ENCODE measurements at regions of chr3 and their contacts with region 1.

Region 1: DNA sequence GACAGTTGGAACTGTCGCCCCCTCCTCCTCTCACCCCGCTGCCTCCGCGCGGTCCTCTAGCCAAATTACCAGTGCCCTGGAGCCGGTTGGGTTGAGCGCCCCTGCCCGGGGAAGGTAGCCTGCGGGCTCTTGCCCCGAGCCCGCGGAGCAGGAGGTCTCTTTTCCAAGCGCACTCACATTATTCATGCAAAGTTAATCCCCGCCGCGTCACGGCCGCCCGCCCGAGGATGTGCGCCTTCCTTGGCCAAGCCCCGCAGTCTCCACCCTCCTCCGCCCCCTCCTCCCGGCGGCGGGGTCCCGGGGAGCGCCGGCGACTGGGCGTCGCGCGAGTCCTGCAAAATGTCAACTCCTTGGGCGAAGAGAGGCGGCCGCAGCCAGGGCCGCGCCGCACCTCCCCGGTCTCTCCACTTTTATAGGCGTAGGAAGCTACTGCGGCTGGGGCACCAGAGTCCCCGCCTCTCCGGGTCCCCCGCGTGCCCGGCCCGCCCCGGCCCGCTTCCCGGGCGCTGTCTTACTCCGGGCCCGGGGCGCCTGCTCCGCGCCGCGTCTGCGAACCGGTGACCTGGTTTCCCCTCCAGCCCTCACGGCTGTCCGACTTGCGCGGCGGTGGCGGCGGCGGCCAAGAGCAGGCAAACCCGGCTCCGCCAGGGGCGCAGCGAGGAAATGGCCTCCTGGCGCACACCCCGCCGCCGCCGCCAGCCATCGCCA is at the start of gene THRB:
- DNase-seq: peak; percentile 84 to 91
- H3K4me3 ChIP-seq: peak within 1 kb of the TSS; percentile 65 to 88
- H3K27ac ChIP-seq: peak within 1 kb of the TSS; percentile 96 to 99
- H3K4me1 ChIP-seq: peaks cover 0 to 54% (median 29%) of the 10 kb centered on the region in 4 donors
- H3K27me3 ChIP-seq: no peaks in the 10 kb centered on the region
- CTCF ChIP-seq: peak; percentile 38 to 39

Region 2: DNA sequence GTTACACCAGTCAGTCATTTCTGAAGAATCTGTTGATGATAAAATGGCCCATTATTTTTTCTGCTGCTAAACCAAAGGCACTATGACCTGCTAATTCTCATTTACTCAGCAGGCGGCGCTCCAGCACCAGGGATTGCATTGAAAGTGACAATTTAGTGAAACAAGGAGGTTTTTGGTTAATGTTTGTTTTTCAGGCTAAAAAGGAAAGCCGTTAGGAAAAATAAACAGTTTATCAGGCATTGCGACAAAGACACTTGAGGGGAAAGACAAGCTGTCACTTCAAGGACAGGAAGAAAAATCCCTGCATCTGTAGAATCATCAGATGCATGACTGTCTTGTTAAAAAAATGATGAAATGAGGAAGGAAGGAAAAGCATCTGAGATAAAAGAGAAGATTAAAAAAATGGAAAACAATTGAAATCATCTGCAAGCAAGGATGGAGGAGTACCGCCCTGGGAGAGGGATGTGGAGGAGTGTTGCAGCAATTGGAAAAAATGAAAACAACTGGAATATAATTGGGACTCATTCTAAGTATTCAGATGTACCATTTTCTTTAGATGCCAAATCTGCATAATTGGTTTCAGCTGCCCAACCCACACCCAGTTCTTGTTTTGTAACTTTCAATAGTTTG is 495.6 kb before region 1 on chr3:
- intact Hi-C with region 1: loop called (anchors 10 kb)
- DNase-seq: peak; percentile 81 to 84
- H3K4me3 ChIP-seq: no peak overlapping the region
- H3K27ac ChIP-seq: peak overlapping the region in 1 of 2 donors; percentile 20
- H3K4me1 ChIP-seq: peaks cover 0 to 16% (median under 1%) of the 10 kb centered on the region in 4 donors
- H3K27me3 ChIP-seq: no peaks in the 10 kb centered on the region
- CTCF ChIP-seq: peak; percentile 91 to 99

Region 3: GRCh38 chr3:24270204-24270691 is 224.5 kb before region 1 on chr3:
- intact Hi-C with region 1: loop called (anchors 10 kb)
- DNase-seq: no peak
- H3K4me3 ChIP-seq: no peak overlapping the region
- H3K27ac ChIP-seq: peak overlapping the region in 1 of 2 donors; percentile 47
- H3K4me1 ChIP-seq: peaks cover 0 to 51% (median 13%) of the 10 kb centered on the region in 4 donors
- H3K27me3 ChIP-seq: no peaks in the 10 kb centered on the region
- CTCF ChIP-seq: no peak

Region 4: DNA sequence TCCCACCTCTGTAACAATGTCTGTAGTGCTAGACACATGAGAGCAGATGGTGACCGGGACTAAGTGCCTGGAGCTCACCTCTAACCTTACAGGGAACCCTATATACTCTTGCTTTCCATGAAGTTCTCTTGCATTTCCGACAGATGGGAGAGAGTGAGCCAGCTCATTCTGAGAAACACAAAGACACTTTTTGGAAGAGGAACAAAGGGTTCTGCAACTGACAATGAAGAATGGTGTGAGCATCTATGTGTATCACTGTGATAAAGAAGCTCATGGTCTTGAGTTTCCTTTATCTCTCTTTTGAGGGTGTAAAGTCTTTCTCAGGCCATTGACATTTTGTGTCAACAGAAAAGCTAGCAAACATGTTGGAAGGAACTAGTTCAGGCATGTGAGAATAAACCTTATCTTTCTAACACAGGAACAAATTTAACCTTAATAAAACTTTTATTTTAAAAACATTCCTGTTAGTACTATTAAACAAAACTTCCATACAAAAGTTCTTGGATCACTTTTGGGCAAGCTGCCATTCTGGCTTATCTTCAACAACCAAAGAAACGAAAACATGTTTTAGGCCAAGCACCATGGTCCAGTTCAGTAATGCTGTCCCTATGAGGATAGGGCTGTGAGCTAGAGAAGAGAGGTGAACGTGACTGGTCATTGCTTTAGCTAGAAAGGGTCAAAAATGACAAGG is 142.8 kb before region 1 on chr3:
- intact Hi-C with region 1: loop called (anchors 10 kb)
- DNase-seq: peak; percentile 74 to 75
- H3K4me3 ChIP-seq: no peak overlapping the region
- H3K27ac ChIP-seq: peak overlapping the region; percentile 68 to 80
- H3K4me1 ChIP-seq: peaks cover 0 to 65% (median 33%) of the 10 kb centered on the region in 4 donors
- H3K27me3 ChIP-seq: no peaks in the 10 kb centered on the region
- CTCF ChIP-seq: no peak

Measured in tibial artery (tissue), 4 donors.